Activated CD8-positive, alpha-beta T cell treated with anti-CD3 and anti-CD28 coated beads, Interleukin-2, amount 10 ng/mL, durations not matched to agents 7 days and 5 days (primary cell): ENCODE measurements at regions of chrX and their contacts with region 1.

Region 1: DNA sequence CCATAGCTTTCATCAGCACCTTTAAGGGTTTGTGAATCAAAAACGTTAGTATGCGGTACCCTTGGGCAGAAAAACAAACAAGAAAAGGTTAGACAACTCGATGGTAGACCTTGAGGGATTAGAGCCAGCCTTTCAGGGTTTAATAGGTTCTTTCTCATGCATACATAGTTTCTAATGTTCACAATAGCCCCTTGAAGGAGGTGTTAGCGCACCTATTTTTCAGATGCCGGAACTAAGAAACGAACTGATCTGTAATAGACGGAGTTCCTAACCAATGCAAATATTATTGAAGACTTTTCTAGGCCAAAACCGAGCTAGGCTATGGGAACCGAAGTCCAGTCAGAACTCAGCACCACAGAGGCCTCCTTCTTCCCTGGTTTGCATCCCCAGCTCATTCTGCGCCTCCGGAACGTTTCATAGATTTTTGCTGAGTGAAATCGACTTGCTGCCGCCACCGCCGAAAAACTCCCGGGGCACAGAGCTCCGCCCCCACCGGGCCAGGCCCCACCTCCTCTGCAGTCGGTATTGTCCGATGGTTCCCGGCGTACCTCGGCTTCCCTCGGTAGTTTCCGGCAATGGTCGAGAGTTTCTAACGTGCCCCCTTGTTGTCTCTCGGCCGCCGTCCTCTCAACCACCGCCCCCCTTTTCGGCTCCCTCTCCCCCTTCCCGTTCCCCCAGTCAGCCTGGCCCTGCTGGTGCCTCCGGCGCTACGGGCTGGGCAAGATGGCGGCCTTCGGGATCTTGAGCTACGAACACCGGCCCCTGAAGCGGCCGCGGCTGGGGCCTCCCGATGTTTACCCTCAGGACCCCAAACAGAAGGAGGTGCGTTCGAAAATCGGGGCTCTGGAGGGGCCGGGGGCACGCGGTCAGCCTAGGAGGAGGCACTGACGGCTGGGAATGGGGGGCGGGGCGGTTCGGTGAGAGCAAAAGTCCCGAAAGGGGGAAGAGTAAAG is at the start of gene MED12:
- DNase-seq: peak; percentile 86
- ATAC-seq: peak; percentile 98
- H3K4me3 Mint-ChIP-seq: peak within 1 kb of the TSS; percentile 77
- H3K27ac Mint-ChIP-seq: peak within 1 kb of the TSS; percentile 84
- H3K4me1 Mint-ChIP-seq: peaks cover 30% of the 10 kb centered on the region
- H3K27me3 Mint-ChIP-seq: no peaks in the 10 kb centered on the region
- total RNA-seq, gene MED12: 49.0 to 50.2 TPM

Region 2: GRCh38 chrX:70988425-70988824 is 129.9 kb before region 1 on chrX:
- CTCF ChIA-PET with region 1: no interaction called
- POLR2A ChIA-PET with region 1: no interaction called
- DNase-seq: no peak
- ATAC-seq: no peak
- H3K4me3 Mint-ChIP-seq: no peak overlapping the region
- H3K27ac Mint-ChIP-seq: no peak overlapping the region
- H3K4me1 Mint-ChIP-seq: no peaks in the 10 kb centered on the region
- H3K27me3 Mint-ChIP-seq: no peaks in the 10 kb centered on the region

Region 3: DNA sequence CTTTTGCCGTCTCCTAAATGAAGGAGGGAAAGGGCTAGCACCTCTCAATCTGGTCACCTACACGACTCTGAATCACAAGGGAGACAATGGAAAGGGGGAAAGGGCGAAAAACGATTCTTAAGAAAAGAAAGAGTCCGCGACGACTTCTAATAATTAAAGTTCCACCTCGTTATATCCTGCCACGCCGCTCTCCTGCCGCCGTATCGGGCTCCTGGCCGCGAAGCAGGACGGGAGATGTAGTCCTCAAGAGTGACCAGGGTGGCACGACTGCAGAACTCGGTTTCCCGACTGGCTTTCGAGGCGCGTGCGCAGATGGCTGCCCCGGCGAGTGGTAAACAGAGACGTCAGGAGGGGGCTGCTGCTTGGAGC is 22.8 kb before region 1 on chrX and contains the start of gene FOXO4:
- CTCF ChIA-PET with region 1: interaction called, 40 read pairs
- POLR2A ChIA-PET with region 1: interaction called, 89 read pairs
- DNase-seq: peak; percentile 93
- ATAC-seq: peak; percentile 90
- H3K4me3 Mint-ChIP-seq: peak within 1 kb of the TSS; percentile 87
- H3K27ac Mint-ChIP-seq: peak within 1 kb of the TSS; percentile 86
- H3K4me1 Mint-ChIP-seq: peaks cover 33% of the 10 kb centered on the region
- H3K27me3 Mint-ChIP-seq: no peaks in the 10 kb centered on the region
- total RNA-seq, gene FOXO4: 12.7 to 14.2 TPM

Region 4: GRCh38 chrX:71103110-71103983 is 15.0 kb before region 1 on chrX:
- CTCF ChIA-PET with region 1: interaction called, 40 read pairs
- POLR2A ChIA-PET with region 1: interaction called, 89 read pairs
- DNase-seq: peak; percentile 72
- ATAC-seq: peak; percentile 44
- H3K4me3 Mint-ChIP-seq: peak overlapping the region; percentile 84
- H3K27ac Mint-ChIP-seq: peak overlapping the region; percentile 95
- H3K4me1 Mint-ChIP-seq: peaks cover 80% of the 10 kb centered on the region
- H3K27me3 Mint-ChIP-seq: no peaks in the 10 kb centered on the region

Region 5: GRCh38 chrX:71128915-71129765 is 10.8 kb after region 1 on chrX:
- CTCF ChIA-PET with region 1: interaction called, 27 read pairs
- POLR2A ChIA-PET with region 1: interaction called, 12 read pairs
- DNase-seq: peak; percentile 80
- ATAC-seq: peak; percentile 91
- H3K4me3 Mint-ChIP-seq: no peak overlapping the region
- H3K27ac Mint-ChIP-seq: peak overlapping the region; percentile 80
- H3K4me1 Mint-ChIP-seq: peaks cover 22% of the 10 kb centered on the region
- H3K27me3 Mint-ChIP-seq: no peaks in the 10 kb centered on the region

Region 6: GRCh38 chrX:71198066-71198465 is 79.8 kb after region 1 on chrX:
- CTCF ChIA-PET with region 1: no interaction called
- POLR2A ChIA-PET with region 1: no interaction called
- DNase-seq: no peak
- ATAC-seq: peak; percentile 34
- H3K4me3 Mint-ChIP-seq: peak overlapping the region; percentile 86
- H3K27ac Mint-ChIP-seq: peak overlapping the region; percentile 86
- H3K4me1 Mint-ChIP-seq: peaks cover 13% of the 10 kb centered on the region
- H3K27me3 Mint-ChIP-seq: no peaks in the 10 kb centered on the region